Naive thymus-derived CD4-positive, alpha-beta T cell (primary cell): ENCODE measurements at regions of chr17 and their contacts with region 1.

Region 1: GRCh38 chr17:7887482-7888183 is 956 bp upstream of the CHD3 start:
- DNase-seq: peak; percentile 41 to 96 (median 93)
- ATAC-seq: peak; percentile 83
- H3K4me3 ChIP-seq: peak overlapping the region; percentile 61
- H3K4me3 Mint-ChIP-seq: no peak overlapping the region
- H3K27ac ChIP-seq: peak overlapping the region; percentile 91
- H3K27ac Mint-ChIP-seq: no peak overlapping the region
- H3K4me1 ChIP-seq: peaks cover 28 to 29% of the 10 kb centered on the region in 2 donors
- H3K4me1 Mint-ChIP-seq: peaks cover 0 to 17% (median 8%) of the 10 kb centered on the region in 7 donors
- H3K27me3 ChIP-seq: no peaks in the 10 kb centered on the region
- H3K27me3 Mint-ChIP-seq: no peaks in the 10 kb centered on the region

Region 2: DNA sequence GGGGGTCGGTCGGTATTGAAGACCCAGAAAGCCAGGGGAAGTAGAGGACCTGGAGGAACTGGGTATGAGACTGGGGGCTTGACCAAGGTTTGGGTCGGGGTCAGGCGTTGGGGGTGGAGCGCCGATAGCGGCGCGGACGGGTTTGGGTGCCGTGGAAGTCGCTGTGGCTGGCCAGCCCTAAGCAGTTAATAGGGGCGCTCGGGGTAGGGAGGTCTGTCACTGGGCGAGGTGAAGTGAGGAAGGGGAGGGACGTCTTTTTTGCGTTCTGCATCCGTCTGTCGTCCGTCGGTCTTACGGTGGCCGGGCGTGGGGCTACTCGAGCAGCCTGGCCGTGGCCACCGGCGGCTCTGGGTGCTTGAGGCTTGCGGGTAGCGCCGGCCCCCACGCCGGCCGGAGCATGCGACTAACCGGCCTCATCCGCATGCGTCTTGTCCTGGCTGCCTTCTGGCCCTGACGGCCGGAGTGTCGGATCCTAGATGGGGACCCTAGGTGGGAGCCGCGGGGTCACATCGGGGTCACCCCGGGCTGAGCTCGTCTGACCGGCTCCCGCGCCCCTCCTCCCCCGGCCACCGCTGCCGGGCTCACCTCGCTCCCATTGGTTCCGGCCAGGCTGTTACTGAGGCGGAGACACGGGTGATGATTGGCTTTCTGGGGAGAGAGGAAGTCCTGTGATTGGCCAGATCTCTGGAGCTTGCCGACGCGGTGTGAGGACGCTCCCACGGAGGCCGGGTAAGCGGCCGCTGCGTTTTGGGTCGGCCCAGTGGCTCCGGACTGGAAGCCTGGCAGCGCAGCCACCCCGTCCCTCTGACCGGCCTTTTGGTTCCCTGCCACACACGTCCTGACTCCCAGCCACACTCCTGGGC is 43.1 kb before region 1 on chr17:
- CTCF ChIA-PET with region 1: no interaction called
- POLR2A ChIA-PET with region 1: interaction called, 3 read pairs
- intact Hi-C with region 1: loop called (anchors 1 kb)
- DNase-seq: peak; percentile 74 to 87 (median 79)
- ATAC-seq: peak; percentile 42
- H3K4me3 ChIP-seq: peak overlapping the region; percentile 84
- H3K4me3 Mint-ChIP-seq: peak overlapping the region; percentile 85 to 99 (median 94)
- H3K27ac ChIP-seq: peak overlapping the region; percentile 100
- H3K27ac Mint-ChIP-seq: peak overlapping the region; percentile 90 to 100 (median 99)
- H3K4me1 ChIP-seq: peaks cover 11 to 26% of the 10 kb centered on the region in 2 donors
- H3K4me1 Mint-ChIP-seq: peaks cover 19 to 41% (median 29%) of the 10 kb centered on the region in 7 donors
- H3K27me3 ChIP-seq: no peaks in the 10 kb centered on the region
- H3K27me3 Mint-ChIP-seq: peaks cover 0 to 2% (median 0%) of the 10 kb centered on the region in 5 donors

Region 3: GRCh38 chr17:7862692-7863437 is 24.8 kb before region 1 on chr17:
- CTCF ChIA-PET with region 1: interaction called, 12 read pairs
- POLR2A ChIA-PET with region 1: interaction called, 14 read pairs
- intact Hi-C with region 1: loop called in 1 of 2 experiments (anchors 1 kb)
- DNase-seq: peak in 3 of 9 donors; percentile 48 to 53 (median 49)
- ATAC-seq: no peak
- H3K4me3 ChIP-seq: no peak overlapping the region
- H3K4me3 Mint-ChIP-seq: no peak overlapping the region
- H3K27ac ChIP-seq: no peak overlapping the region
- H3K27ac Mint-ChIP-seq: peak overlapping the region in 1 of 9 donors; percentile 60
- H3K4me1 ChIP-seq: peaks cover 17 to 19% of the 10 kb centered on the region in 2 donors
- H3K4me1 Mint-ChIP-seq: peaks cover 16 to 32% (median 27%) of the 10 kb centered on the region in 7 donors
- H3K27me3 ChIP-seq: no peaks in the 10 kb centered on the region
- H3K27me3 Mint-ChIP-seq: no peaks in the 10 kb centered on the region

Region 4: GRCh38 chr17:7897773-7898172 is 10.1 kb after region 1 on chr17:
- CTCF ChIA-PET with region 1: interaction called, 4 read pairs
- POLR2A ChIA-PET with region 1: interaction called, 4 read pairs
- intact Hi-C with region 1: loop called in 1 of 2 experiments (anchors 1 kb)
- DNase-seq: peak in 4 of 9 donors; percentile 33 to 42 (median 36)
- ATAC-seq: peak; percentile 75
- H3K4me3 ChIP-seq: no peak overlapping the region
- H3K4me3 Mint-ChIP-seq: no peak overlapping the region
- H3K27ac ChIP-seq: no peak overlapping the region
- H3K27ac Mint-ChIP-seq: peak overlapping the region in 8 of 9 donors; percentile 0 to 92 (median 78)
- H3K4me1 ChIP-seq: no peaks in the 10 kb centered on the region
- H3K4me1 Mint-ChIP-seq: peaks cover 8 to 27% (median 15%) of the 10 kb centered on the region in 7 donors
- H3K27me3 ChIP-seq: no peaks in the 10 kb centered on the region
- H3K27me3 Mint-ChIP-seq: no peaks in the 10 kb centered on the region

Region 5: DNA sequence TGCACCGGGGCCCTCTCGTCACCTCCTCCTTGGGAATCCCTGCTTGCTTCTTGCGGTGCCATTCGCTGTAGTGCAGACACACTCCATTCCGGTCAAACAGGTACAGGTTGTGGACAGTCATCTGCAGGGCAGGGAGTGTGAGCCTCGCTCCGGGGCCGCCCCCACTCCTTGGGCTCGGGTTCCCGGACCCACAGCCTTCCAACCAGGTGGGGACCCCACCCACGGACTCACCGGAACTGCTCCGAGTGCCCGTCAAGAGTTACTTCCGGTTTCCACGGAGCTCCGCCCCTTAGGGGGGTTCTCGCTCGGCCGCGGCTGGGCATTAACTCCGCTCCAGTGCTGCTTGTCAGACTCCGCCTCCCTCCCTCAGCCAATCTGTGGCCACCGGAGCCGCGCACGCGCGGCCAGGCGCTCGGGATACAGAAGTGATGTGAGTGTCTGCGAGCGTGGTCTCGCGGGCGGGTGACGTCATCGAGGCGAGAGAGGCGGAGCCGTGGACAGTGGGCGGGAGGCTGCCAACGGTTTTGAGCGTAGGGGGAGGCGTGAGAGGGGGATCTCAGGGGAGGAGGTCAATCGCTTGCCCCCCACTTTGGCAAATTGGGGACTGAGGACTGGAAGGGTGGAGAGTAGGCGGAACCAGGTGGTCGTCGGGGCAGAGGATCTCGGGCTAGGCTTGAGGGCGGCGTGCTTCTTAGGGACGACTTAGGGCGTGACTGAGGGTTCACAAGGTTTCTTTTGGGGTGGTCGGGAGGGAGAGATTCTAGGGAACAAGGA is 44.3 kb after region 1 on chr17 and contains the starts of genes CNTROB and TRAPPC1:
- CTCF ChIA-PET with region 1: no interaction called
- POLR2A ChIA-PET with region 1: interaction called, 9 read pairs
- intact Hi-C with region 1: loop called (anchors 1 to 5 kb)
- DNase-seq: peak; percentile 97 to 100 (median 99)
- ATAC-seq: peak; percentile 98
- H3K4me3 ChIP-seq: peak within 1 kb of the TSS; percentile 66
- H3K4me3 Mint-ChIP-seq: peak within 1 kb of the TSS; percentile 95 to 100 (median 96)
- H3K27ac ChIP-seq: peak within 1 kb of the TSS; percentile 88
- H3K27ac Mint-ChIP-seq: peak within 1 kb of the TSS; percentile 82 to 99 (median 96)
- H3K4me1 ChIP-seq: peaks cover 20 to 28% of the 10 kb centered on the region in 2 donors
- H3K4me1 Mint-ChIP-seq: peaks cover 31 to 60% (median 54%) of the 10 kb centered on the region in 7 donors
- H3K27me3 ChIP-seq: no peaks in the 10 kb centered on the region
- H3K27me3 Mint-ChIP-seq: no peaks in the 10 kb centered on the region
- total RNA-seq, gene CNTROB: 29.0 to 50.5 (median 33.6) TPM
- total RNA-seq, gene TRAPPC1: 71.4 to 216 (median 103) TPM